Posterior vena cava (tissue), 2 donors: ENCODE measurements at regions of chr14 and their contacts with region 1.

Region 1: DNA sequence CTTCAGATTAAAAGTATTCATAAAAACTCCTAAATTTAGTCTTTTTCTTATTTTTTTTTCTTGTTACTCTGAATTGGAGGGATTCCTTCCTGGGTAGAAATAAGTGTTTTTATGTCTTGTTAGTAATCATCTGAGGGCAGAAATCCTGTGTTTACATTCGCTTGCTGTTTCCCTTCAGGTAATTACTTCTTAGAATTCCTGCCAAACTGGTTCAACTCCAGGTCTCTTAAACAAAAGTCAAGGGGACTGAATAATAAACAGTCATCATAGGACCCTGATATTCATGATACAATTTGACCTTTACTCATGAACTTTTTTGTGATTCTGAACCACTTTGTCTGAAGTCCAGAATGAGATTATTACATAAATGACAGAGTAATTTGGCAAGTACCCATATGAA is 843.9 kb downstream of the FLRT2 start:
- DNase-seq: no peak

Region 2: DNA sequence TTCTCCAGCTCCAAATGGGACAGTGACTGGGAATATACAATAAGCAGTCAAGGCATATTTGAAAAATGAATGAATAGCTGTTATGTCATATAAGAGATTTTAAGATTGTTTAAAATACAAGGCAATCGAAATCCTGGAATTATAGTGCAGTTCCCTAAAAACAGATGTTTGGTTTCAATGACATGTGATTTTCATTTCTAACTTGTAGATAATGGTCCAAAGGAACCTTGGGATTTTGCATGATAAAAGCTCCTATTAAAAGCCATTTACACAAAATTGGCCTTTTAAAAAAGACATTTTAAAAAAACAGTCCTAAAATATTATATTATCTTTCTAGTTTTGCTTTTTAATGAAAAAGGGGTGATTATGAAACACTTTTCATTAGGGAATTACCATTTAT is 714.0 kb after region 1 on chr14:
- intact Hi-C with region 1: loop called in 1 of 2 experiments (anchors 5 kb)
- DNase-seq: no peak